ENCODE measurements at regions of chr1 and their contacts with region 1.

Region 1: DNA sequence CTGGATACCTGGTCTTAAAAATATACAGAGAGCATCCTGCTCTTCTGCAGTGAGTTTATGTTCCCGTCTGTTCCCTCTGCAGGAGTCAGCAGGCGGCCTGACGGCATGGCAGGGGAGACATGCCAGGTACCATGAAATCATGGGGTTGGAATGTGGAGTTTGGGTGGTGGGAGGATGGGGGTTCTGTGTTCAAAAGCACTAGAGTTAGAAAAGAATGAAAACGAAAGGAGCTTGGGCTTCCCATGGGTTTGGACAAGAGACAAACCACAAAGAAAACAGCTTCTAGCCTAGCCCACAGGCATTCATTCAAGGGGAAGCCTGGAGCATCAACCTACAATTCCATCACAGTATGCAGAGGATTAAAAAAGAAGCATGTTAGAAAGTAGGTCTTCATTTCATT is 59.9 kb downstream of the WARS2 start:
- DNase-seq: peak; percentile 95
- ATAC-seq: peak; percentile 96
- H3K4me3 ChIP-seq: peak overlapping the region; percentile 21; the same call in 1 of the 2 replicates
- H3K27ac ChIP-seq: no peak overlapping the region
- H3K4me1 ChIP-seq: no peaks in the 10 kb centered on the region
- H3K27me3 ChIP-seq: no peaks in the 10 kb centered on the region
- CTCF ChIP-seq: no peak
- POLR2A ChIP-seq: no peak
- RAD21 ChIP-seq: no peak

Region 2: GRCh38 chr1:119132179-119132578 is 51.6 kb after region 1 on chr1:
- CTCF ChIA-PET with region 1: no interaction called
- POLR2A ChIA-PET with region 1: no interaction called
- dilution Hi-C with region 1: no loop called
- in situ Hi-C with region 1: no loop called
- intact Hi-C with region 1: loop called (anchors 5 kb)
- DNase-seq: no peak
- ATAC-seq: no peak
- H3K4me3 ChIP-seq: no peak overlapping the region
- H3K27ac ChIP-seq: no peak overlapping the region
- H3K4me1 ChIP-seq: peaks cover 3% of the 10 kb centered on the region; the same call in 1 of the 2 replicates
- H3K27me3 ChIP-seq: no peaks in the 10 kb centered on the region
- CTCF ChIP-seq: no peak
- POLR2A ChIP-seq: no peak
- RAD21 ChIP-seq: no peak

Region 3: GRCh38 chr1:119204197-119204960 is 123.8 kb after region 1 on chr1:
- CTCF ChIA-PET with region 1: no interaction called
- POLR2A ChIA-PET with region 1: no interaction called
- dilution Hi-C with region 1: no loop called
- in situ Hi-C with region 1: no loop called
- intact Hi-C with region 1: no loop called
- DNase-seq: no peak
- ATAC-seq: no peak
- H3K4me3 ChIP-seq: no peak overlapping the region
- H3K27ac ChIP-seq: no peak overlapping the region
- H3K4me1 ChIP-seq: no peaks in the 10 kb centered on the region
- H3K27me3 ChIP-seq: no peaks in the 10 kb centered on the region
- CTCF ChIP-seq: no peak
- POLR2A ChIP-seq: no peak
- RAD21 ChIP-seq: no peak